OCI-LY7 (cell line): ENCODE measurements at regions of chr11 and their contacts with region 1.

Region 1: GRCh38 chr11:114262681-114263512 is 33.3 kb upstream of the NNMT start:
- DNase-seq: peak; percentile 50
- H3K4me3 ChIP-seq: no peak overlapping the region
- H3K27ac ChIP-seq: no peak overlapping the region
- H3K4me1 ChIP-seq: peaks cover 10% of the 10 kb centered on the region
- CTCF ChIP-seq: peak; percentile 75

Region 2: DNA sequence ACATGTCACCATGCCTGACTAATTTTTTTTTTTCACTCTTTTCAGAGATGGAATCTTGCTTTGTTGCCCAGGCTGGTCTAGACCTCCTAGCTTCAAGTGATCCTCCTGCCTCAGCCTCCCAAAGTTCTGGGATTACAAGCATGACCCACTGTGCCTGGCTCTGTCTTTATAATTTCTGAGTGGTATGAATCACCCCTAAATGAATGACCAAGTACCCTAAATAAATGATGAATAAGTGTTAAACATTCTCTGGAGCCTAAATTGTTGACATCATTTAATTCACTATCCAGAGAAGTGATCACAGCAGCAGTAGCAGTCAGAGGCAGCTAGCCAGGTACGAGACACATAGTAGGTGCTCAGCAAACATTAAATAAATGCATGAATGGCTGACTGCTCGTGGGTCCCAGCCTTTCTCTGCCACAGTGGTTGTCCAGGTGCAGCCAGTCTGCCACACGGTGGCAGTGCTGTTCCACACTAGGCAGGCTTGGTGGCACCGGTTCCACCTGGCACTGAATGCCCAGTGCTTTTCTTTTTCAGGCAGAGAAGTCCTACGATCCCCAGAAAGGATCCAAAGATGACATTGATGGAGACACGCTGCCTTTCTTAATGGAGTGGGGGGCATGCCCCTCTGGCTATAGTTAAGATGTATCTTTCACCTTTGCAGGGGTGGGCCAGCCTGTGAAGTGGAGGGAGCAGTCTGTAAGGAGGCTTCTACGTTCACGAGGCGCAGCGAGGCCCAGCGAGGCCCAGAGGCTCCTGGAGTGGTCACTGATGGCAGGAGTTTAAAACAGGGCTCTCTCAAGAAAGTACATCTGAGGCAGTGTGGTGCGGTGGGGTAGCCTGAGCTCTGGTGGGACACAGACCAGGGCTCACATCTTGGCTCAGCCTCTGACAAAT is 957.2 kb before region 1 on chr11:
- CTCF ChIA-PET with region 1: no interaction called
- POLR2A ChIA-PET with region 1: no interaction called
- intact Hi-C with region 1: loop called (anchors 2 kb)
- DNase-seq: peak; percentile 53
- H3K4me3 ChIP-seq: no peak overlapping the region
- H3K27ac ChIP-seq: no peak overlapping the region
- H3K4me1 ChIP-seq: no peaks in the 10 kb centered on the region
- CTCF ChIP-seq: peak; percentile 89

Region 3: GRCh38 chr11:113896156-113896879 is 366.6 kb before region 1 on chr11:
- CTCF ChIA-PET with region 1: no interaction called
- POLR2A ChIA-PET with region 1: no interaction called
- intact Hi-C with region 1: loop called (anchors 1 kb)
- DNase-seq: peak; percentile 48
- H3K4me3 ChIP-seq: no peak overlapping the region
- H3K27ac ChIP-seq: no peak overlapping the region
- H3K4me1 ChIP-seq: no peaks in the 10 kb centered on the region
- CTCF ChIP-seq: peak; percentile 92

Region 4: DNA sequence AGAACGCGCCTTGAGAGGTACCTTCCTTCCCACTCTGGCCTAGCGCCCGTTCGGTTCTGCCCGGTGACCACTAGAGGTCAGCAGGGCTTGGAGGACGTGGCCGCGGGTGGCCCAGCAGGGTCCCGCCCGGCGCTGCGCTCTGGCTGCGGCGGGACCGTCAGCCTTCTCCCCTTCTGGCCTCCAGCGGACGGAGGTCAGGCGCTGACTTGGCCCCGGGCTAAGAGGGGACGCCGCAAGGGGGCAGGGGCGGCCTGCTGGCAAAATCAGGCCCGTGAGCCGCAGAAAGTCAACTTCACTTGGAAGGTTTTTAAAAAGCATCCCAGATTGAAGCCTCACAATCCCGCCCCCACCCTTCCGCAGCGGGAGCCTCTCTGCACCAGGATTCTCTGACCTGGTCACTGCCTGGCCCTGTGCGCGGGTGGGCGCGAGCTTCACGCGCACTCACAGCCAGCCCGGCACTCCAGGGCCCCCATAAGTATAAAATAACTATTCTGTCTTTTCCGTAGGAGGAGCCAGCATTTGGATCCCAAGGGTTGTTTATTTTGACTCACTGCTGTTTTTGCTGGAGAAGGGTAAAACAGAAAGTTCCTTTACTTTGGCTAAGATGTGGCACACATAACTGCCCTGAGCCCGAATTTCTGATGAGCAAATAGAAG is 226.6 kb before region 1 on chr11:
- CTCF ChIA-PET with region 1: no interaction called
- POLR2A ChIA-PET with region 1: no interaction called
- intact Hi-C with region 1: loop called (anchors 2 kb)
- DNase-seq: peak; percentile 26
- H3K4me3 ChIP-seq: no peak overlapping the region
- H3K27ac ChIP-seq: no peak overlapping the region
- H3K4me1 ChIP-seq: no peaks in the 10 kb centered on the region
- CTCF ChIP-seq: peak; percentile 58

Region 5: GRCh38 chr11:114180301-114181055 is 82.4 kb before region 1 on chr11:
- CTCF ChIA-PET with region 1: no interaction called
- POLR2A ChIA-PET with region 1: interaction called, 5 read pairs
- intact Hi-C with region 1: loop called (anchors 5 kb)
- DNase-seq: peak; percentile 74
- H3K4me3 ChIP-seq: no peak overlapping the region
- H3K27ac ChIP-seq: no peak overlapping the region
- H3K4me1 ChIP-seq: peaks cover 33% of the 10 kb centered on the region
- CTCF ChIP-seq: peak; percentile 84